Panc1 (cell line): ENCODE measurements at regions of chr11 and their contacts with region 1.

Region 1: DNA sequence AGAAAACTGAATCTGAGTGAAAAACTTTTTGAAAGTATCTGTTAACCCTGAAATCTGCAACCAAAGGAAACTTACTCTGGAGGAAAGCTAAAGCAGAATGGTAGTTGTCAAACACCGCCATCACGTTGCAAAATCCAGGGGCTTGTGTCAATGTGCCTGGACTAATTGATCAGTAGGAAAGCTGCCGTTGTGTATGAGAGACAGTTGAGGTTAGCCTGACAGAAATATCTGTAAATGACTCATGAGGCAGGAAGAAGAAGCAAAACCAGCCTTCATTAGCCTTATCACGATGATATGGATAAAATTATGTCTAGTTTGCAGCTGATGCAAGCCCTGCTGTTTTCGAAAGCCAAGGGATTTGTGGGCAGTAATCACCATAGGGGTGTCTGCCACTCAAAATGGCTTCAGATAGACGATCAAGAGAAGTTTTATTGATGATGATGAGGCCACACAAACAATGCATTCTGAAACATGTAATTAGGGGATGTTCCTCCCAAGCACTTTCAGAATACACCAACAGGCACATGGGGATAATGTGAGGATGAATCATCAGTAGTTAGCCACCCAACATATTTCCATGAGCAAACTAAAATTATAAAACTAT is 8.9 kb downstream of the SCGB1A1 start:
- DNase-seq: no peak
- ATAC-seq: no peak
- H3K4me3 ChIP-seq: no peak overlapping the region
- H3K27ac ChIP-seq: peak overlapping the region; percentile 98
- H3K4me1 ChIP-seq: peaks cover 54% of the 10 kb centered on the region
- H3K27me3 ChIP-seq: no peaks in the 10 kb centered on the region
- CTCF ChIP-seq: no peak

Region 2: GRCh38 chr11:62413060-62413696 is 14.6 kb before region 1 on chr11:
- CTCF ChIA-PET with region 1: interaction called, 13 read pairs
- POLR2A ChIA-PET with region 1: no interaction called
- in situ Hi-C with region 1: no loop called
- intact Hi-C with region 1: no loop called
- DNase-seq: no peak
- ATAC-seq: peak; percentile 14; the same call in 1 of the 2 replicates
- H3K4me3 ChIP-seq: no peak overlapping the region
- H3K27ac ChIP-seq: peak overlapping the region; percentile 55; the same call in 1 of the 2 replicates
- H3K4me1 ChIP-seq: peaks cover 13% of the 10 kb centered on the region; the same call in 1 of the 2 replicates
- H3K27me3 ChIP-seq: no peaks in the 10 kb centered on the region
- CTCF ChIP-seq: no peak

Region 3: DNA sequence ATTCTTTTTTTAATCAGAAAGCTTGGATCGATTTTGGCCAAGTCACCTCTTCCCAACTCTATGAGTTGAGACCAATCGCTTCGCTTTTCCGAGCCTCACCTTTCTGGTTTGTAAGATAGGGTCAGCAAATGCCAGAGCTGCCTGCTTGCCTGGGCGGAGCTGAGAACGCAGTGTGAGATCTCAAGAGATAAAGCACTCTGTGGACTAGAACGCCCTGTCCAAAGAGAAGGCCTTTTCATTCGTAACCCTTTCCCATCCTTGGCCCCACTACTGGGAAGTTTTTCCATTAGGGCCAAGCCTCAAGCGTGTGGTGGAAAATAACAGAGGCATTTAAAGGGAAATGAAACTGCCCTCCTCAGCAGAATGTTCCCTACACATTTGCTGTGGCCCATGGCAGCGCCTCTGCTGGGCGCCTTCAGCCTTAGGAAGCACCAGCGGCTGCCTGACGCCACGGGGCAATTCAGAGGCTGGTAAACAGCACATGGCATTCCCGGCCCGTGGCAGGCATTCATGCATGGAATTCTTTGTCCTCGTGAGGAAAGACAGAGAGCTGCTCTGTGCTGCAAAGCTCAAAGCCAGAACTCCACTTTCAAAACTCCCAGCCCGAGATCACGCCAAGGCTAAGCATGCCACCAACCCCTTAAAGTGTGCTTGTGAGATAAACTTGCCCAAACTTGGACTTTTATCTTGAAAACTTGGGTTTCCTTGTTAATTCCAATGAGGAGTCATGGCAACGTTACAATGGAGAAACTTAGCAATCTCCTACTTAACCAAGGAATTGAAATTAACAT is 80.7 kb after region 1 on chr11:
- CTCF ChIA-PET with region 1: interaction called, 11 read pairs
- POLR2A ChIA-PET with region 1: no interaction called
- in situ Hi-C with region 1: no loop called
- intact Hi-C with region 1: loop called (anchors 2 kb)
- DNase-seq: peak; percentile 27
- ATAC-seq: peak; percentile 82
- H3K4me3 ChIP-seq: peak overlapping the region in 1 of 2 experiments; percentile 35; a peak in 2 of 4 replicates
- H3K27ac ChIP-seq: peak overlapping the region; percentile 99
- H3K4me1 ChIP-seq: peaks cover 93% of the 10 kb centered on the region
- H3K27me3 ChIP-seq: no peaks in the 10 kb centered on the region
- CTCF ChIP-seq: peak; percentile 83; the same call in 1 of the 2 replicates

Region 4: DNA sequence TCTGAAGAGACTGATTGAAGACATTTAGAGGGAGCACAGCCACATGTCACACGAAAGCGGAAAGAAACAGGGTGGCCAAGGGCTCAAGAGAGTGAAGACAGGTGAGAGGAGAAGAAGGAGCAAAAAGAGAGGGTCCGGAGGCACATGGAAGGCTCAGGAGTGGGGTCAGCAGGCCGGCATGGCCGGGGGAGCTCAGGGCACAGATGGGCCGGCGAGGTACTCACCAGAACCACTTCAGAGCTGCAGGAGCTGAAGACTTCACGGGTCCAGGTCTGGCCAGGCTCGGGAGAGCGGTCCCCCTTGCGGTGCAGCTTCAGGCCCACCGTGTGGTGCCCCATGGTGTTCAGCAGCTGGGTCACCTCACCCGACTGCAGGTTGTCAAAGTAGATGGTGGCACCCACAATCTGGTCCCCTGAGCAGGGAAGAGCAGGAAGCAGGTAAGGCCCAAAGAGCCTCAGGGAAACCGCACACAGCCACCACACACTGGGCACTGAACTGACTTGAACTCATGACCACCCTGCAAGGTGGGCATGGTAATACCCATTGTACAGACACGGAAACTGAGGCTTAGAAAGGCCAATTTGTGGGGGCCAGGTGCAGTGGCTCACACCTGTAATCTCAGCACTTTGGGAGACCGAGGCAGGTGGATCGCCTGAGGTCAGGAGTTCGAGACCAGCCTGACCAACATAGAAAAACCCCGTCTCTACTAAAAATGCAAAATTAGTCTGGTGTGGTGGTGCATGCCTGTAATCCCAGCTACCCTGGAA is 107.2 kb after region 1 on chr11:
- CTCF ChIA-PET with region 1: interaction called, 10 read pairs
- POLR2A ChIA-PET with region 1: no interaction called
- in situ Hi-C with region 1: no loop called
- intact Hi-C with region 1: loop called (anchors 5 kb)
- DNase-seq: no peak
- ATAC-seq: no peak
- H3K4me3 ChIP-seq: no peak overlapping the region
- H3K27ac ChIP-seq: 0 out of 2 replicates have a peak overlapping the region, but pooled peaks have one; percentile 8
- H3K4me1 ChIP-seq: peaks cover 29% of the 10 kb centered on the region
- H3K27me3 ChIP-seq: no peaks in the 10 kb centered on the region
- CTCF ChIP-seq: no peak

Region 5: DNA sequence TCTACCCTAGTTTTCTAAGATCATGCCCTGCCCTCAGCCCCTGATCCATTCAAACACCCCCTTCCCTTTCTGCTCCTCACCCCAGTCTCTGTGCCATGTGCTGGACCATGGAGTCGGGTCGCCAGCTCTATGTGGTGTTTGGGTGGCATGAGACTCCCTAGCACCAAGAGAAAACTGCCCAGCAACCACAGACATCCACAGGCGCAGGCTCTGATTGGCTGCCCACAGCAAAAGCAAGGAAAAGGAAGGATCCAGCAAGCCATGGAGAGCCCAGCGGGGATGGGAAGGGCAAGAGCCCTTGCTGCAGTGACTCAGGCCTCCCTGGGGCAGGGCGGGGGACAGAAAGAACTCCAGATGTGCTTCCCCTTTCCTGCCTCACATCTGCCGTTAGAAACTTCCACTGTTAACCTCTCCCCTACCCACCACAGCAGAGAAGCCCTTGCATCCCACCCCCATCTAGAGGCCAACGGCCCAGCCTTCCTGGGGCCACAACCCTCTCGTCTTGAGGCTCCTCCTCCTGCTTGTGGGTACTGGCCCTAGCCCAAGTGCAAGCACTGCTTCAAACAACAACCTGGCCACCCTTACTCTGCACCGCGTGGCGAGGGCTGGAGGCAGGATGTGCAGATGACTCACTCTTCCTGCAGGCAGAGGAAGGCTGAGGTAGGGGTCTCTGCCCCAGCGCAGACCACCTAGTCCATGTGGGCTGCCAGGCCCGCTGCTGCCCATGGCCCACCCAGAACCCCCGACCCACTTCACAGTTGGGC is 128.6 kb after region 1 on chr11:
- CTCF ChIA-PET with region 1: interaction called, 14 read pairs
- POLR2A ChIA-PET with region 1: no interaction called
- in situ Hi-C with region 1: no loop called
- intact Hi-C with region 1: no loop called
- DNase-seq: peak; percentile 87
- ATAC-seq: peak; percentile 74
- H3K4me3 ChIP-seq: peak overlapping the region in 1 of 2 experiments; percentile 15; a peak in 1 of 4 replicates
- H3K27ac ChIP-seq: peak overlapping the region; percentile 94
- H3K4me1 ChIP-seq: peaks cover 95% of the 10 kb centered on the region
- H3K27me3 ChIP-seq: no peaks in the 10 kb centered on the region
- CTCF ChIP-seq: no peak

Region 6: GRCh38 chr11:62753736-62754603 is 326.2 kb after region 1 on chr11 and contains the start of gene ZBTB3:
- CTCF ChIA-PET with region 1: no interaction called
- POLR2A ChIA-PET with region 1: interaction called, 14 read pairs
- in situ Hi-C with region 1: no loop called
- intact Hi-C with region 1: no loop called
- DNase-seq: peak; percentile 99
- ATAC-seq: peak; percentile 98
- H3K4me3 ChIP-seq: peak within 1 kb of the TSS; percentile 76 to 87
- H3K27ac ChIP-seq: peak within 1 kb of the TSS; percentile 98
- H3K4me1 ChIP-seq: peaks cover 8% of the 10 kb centered on the region; the same call in 1 of the 2 replicates
- H3K27me3 ChIP-seq: no peaks in the 10 kb centered on the region
- CTCF ChIP-seq: no peak
- total RNA-seq, gene ZBTB3: 12.9 TPM

Region 7: GRCh38 chr11:62980133-62980760 is 552.5 kb after region 1 on chr11:
- CTCF ChIA-PET with region 1: no interaction called
- POLR2A ChIA-PET with region 1: no interaction called
- in situ Hi-C with region 1: no loop called
- intact Hi-C with region 1: no loop called
- DNase-seq: no peak
- ATAC-seq: no peak
- H3K4me3 ChIP-seq: no peak overlapping the region
- H3K27ac ChIP-seq: no peak overlapping the region
- H3K4me1 ChIP-seq: no peaks in the 10 kb centered on the region
- H3K27me3 ChIP-seq: no peaks in the 10 kb centered on the region; the same call in 1 of the 2 replicates
- CTCF ChIP-seq: no peak